ENCODE measurements at regions of chr11 and their contacts with region 1.

Region 1: GRCh38 chr11:114340311-114341131 is 44.3 kb downstream of the NNMT start:
- DNase-seq: no peak
- CTCF ChIP-seq: peak; percentile 61

Region 2: GRCh38 chr11:112697381-112698178 is 1642.9 kb before region 1 on chr11:
- in situ Hi-C with region 1: no loop called
- DNase-seq: no peak
- CTCF ChIP-seq: no peak

Region 3: DNA sequence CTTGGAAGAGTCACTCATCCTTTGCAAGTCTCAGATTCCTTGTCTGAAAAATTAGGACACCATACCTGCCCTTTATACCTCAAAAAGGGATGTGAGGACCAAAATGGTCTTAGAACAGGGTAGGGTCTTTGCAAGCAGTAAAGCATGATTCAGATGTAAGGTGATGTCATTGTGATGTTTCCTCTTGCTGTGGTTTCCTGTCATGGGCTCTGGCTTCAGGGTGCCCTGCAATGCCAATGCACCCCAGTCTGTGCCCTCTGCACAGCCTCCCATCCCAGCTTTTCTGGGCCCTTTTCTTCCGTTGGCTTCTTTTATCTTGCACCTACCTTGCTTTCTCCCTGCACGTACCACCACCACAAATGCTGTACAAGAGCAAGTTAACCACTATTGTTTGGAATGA is 132.1 kb before region 1 on chr11:
- in situ Hi-C with region 1: no loop called
- DNase-seq: no peak
- CTCF ChIP-seq: no peak

Region 4: DNA sequence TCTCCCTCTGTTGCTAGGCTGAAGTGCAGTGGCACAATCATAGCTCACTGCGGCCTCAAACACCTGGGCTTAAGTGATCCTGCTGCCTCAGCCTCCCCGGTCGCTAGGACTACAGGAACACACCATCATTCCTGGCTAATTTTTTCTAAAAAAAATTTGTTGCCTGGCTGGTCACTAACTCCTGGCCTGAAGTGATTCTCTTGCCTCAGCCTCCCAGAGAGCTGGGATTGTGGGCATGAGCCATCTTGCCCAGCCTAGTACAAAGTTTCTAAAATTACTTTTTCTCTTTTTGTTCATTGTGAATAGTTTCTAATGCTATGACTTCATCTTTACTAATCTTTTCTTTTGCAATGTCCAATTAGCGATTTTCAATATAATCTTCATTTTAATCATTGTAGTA is 72.4 kb after region 1 on chr11:
- in situ Hi-C with region 1: no loop called
- DNase-seq: no peak
- CTCF ChIP-seq: no peak

Region 5: DNA sequence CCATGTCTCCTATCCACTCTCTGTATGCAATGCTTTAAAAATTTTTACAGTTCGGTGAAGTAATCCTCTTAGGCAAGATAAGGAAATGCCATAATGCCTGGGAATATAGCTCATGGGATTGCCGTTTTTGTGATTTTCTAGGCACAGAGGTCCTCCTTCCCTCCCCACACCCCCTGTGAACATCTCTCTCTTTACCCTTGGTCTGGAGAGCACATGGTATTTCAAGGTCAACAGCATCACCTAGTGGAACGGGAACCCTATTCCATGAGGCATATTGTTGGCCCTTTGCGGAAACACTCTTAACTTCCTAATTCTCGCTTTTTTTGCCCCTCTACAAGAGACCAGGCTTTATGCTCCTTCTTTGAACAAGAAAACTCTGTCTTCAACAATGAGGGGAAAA is 246.3 kb after region 1 on chr11:
- in situ Hi-C with region 1: loop called (anchors 25 kb)
- DNase-seq: no peak
- CTCF ChIP-seq: no peak

Measured in GM13976 (cell line).